AG04449 (cell line): ENCODE measurements at regions of chr11 and their contacts with region 1.

Region 1: GRCh38 chr11:93529707-93530467 is 13.3 kb downstream of the SMCO4 start:
- DNase-seq: no peak
- H3K4me3 ChIP-seq: no peak overlapping the region
- CTCF ChIP-seq: no peak

Region 2: GRCh38 chr11:93543292-93543977 is 13.5 kb after region 1 on chr11 and contains the start of gene SMCO4:
- CTCF ChIA-PET with region 1: interaction called, 11 read pairs
- POLR2A ChIA-PET with region 1: interaction called, 5 read pairs
- DNase-seq: no peak
- H3K4me3 ChIP-seq: peak within 1 kb of the TSS; percentile 65
- CTCF ChIP-seq: peak; percentile 83

Region 3: DNA sequence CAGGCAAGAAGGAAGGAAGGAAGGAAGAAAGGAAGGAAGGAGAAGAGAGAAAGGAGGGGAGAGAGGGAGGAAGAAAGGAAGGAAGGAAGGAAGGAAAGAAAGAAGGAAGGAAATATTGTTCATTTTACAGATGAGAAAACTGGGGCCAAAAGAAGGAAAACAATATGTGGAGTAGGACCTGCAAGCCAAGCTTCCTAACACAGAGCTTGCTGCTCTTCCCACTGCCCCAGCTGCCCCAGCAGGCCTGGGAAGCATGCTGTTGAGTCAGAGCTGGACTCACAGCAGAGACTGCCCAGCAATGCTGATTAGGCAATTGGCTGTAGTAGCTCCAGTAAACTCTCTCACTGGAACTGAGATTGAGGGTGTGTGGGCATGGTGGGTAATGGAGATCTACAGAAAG is 55.9 kb after region 1 on chr11:
- CTCF ChIA-PET with region 1: no interaction called
- POLR2A ChIA-PET with region 1: no interaction called
- DNase-seq: peak; percentile 42
- H3K4me3 ChIP-seq: no peak overlapping the region
- CTCF ChIP-seq: no peak